GM18951 (cell line): ENCODE measurements at regions of chr2 and their contacts with region 1.

Region 1: DNA sequence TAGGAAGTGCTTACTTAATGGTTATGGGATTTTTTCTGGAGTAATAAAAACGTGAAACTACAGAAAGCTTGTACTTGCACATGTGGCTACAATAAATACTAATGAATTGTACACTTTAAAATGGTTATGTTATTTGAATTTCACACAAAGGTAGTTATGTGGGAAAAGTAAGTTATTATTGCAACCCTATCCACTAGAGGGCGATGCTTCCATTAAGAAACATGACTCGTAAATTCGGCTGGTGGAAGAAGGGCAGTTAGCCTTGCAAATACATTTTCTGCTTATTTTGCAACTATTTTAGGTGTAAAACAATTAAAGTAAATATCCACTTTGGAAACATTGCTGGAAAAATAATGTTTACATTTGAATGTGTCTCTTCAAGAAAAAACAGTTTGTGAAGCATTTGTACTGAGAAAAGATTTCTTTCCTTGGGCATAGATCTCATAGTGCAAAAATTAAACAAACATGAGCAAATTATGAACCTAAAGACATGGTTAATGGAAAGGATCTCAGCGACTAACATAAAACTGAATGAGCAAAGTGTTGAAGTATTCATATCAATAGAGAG is 68.1 kb upstream of the CSRNP3 start:
- POLR2A ChIP-seq: no peak

Region 2: DNA sequence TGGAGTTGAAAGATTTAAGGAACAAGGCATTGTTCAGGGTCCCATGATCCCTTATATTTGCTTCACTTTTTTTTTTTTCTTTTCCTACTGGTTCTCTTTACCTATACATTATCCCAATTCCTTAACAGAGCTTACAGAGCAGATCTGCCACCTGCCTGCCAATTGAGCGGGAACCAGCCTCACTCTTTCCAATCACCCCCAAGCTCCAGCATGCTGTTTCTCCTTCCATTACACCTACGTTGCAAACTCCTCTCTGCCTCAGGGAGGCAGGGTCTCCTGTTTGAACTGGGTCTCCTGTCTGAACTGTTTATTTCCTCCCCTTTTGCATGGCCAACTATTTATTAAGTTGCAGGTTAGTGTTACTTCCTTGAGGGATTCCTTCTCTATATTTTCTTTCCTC is 368.8 kb before region 1 on chr2:
- in situ Hi-C with region 1: no loop called
- POLR2A ChIP-seq: no peak

Region 3: GRCh38 chr2:165874445-165875039 is 473.2 kb after region 1 on chr2:
- in situ Hi-C with region 1: loop called (anchors 25 kb)
- POLR2A ChIP-seq: no peak